ENCODE measurements at regions of chr16 and their contacts with region 1.

Region 1: DNA sequence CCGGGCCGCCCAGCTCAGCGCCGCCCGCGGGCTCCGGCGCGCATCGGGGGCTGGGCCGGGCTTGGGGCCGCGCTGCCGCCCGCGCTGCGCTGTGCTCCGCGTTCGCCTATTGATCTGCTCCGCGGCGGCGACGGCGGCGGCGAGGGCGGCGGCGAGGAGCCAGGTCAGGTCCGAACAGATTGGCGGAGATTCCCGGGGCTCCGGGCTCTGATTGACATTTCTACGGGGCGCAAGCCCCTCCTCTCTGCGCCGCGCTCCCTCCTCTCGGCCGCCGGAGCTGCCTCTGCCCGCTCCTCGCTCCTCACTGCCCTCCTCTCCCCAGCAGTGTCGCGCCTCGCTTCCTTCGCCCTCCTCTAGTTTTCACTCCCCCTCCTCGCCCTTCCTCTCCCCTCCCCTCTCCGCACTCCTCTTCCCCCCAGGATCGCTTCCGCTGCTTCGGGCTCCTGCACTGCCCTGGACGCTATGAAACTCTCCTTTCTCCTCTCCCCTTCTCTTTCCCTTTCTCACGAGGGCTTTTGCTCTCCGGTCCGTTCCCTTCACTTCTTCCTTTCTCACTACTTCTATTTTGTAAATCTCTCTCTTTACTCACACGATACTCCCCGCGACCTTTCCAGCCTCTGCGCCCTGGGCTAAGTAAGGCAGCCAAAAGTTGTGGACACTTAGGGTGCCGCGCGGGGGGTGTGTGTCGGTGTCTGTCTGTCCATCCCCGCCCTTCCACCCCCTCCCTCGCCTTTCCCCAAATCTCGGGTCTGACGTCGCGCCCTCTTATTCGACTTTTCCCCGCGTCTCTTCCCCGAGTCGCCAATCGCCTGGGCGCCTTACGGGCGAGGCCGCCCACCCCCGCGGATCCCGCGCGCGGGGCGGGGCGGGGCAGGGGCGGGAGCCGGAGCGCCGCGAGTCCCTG is at the start of gene IRX3:
- DNase-seq: peak; percentile 93
- ATAC-seq: peak; percentile 90
- total RNA-seq, gene IRX3: 38.8 TPM

Region 2: GRCh38 chr16:53892155-53892554 is 394.2 kb before region 1 on chr16:
- intact Hi-C with region 1: loop called (anchors 2 kb)
- DNase-seq: no peak
- ATAC-seq: peak; percentile 60

Region 3: DNA sequence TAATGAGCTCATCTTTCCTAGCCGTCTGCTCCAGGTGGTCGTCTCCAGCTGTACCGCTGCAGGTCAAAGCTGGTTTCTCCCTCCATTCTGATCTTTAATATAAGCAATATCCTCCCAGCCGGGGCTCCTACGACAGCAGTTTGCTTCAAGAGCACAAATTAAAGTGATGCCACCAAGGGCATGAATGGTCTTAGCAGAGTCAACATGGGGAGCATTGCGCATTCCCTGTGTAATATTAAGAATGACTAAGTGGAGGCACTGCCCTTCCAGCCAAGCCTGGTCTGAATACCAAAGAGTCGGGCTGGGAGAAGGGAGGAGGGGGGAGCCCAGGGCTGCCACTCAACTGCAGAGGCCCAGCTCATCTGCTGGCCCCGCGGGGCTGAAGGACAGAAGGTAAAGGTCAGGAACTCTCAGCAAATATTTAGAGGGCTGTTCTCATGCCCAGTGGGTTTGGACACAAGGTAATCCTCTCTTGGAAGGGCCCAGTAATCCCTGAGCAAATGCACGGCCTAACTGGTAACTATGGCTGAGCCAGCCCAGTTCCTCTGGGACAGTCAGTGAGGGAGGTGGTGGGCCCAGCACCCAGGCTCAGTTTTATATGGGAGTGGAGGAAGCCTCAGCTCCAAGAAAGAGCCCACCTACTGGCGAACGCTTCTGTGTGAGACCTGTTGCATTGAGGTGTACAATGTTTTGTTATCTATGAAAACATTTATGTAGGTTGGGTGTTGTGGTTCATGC is 121.0 kb before region 1 on chr16:
- intact Hi-C with region 1: no loop called
- DNase-seq: no peak
- ATAC-seq: no peak

Region 4: DNA sequence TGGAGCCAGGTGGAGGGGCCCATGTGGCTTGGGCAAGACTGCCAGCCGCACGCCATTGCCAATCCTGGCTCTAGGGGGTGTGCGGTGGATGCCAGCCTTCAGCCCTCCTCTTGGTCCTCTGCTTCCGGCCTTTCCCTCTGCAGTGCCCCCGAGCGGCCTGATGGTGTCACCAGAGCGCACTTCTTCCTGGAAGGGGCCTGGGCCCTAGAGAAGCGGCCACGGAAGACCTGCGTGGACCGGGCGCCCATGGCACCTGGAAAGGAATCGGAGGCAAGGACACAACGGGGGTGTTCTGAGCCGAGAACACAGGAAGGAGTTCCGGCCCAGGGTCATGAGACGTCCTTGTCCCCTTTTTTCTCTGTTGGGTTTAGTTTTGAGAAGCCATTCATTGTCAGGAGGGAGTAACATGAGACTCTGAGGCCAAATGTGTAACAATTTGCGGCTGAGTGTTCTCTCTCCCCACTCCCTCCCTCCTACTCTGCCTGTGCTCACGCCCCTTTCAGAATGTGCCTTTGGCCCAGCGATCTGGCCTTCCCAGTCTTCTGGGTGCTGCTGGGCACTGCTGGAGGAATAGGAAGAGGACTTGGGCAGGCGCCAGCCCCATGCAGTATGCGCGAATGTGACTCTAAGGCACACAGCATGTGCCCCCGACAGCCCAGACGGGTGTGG is 92.5 kb before region 1 on chr16:
- intact Hi-C with region 1: loop called (anchors 2 kb)
- DNase-seq: peak; percentile 88
- ATAC-seq: peak; percentile 89

Region 5: DNA sequence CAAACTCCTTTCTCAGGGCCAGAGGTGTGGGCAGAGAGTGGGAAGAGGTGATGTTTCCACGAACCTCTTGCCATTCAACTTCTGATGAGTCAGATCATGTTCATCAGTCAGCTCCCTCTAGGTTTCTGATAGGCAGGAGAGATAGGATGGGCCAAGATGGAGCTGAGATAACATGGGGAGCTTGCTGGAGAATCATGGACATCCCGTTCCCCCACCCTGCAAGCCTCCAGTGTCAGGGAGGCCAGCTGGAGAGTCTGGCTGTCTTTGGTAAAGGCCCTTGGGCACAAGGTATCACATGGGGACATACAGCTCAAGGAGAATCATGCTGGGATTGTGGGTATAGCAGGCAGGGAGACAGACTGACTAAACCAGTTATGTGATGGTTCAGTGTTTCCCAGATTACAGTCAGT is 136.2 kb after region 1 on chr16:
- intact Hi-C with region 1: loop called (anchors 5 kb)
- DNase-seq: no peak
- ATAC-seq: peak; percentile 29

Region 6: DNA sequence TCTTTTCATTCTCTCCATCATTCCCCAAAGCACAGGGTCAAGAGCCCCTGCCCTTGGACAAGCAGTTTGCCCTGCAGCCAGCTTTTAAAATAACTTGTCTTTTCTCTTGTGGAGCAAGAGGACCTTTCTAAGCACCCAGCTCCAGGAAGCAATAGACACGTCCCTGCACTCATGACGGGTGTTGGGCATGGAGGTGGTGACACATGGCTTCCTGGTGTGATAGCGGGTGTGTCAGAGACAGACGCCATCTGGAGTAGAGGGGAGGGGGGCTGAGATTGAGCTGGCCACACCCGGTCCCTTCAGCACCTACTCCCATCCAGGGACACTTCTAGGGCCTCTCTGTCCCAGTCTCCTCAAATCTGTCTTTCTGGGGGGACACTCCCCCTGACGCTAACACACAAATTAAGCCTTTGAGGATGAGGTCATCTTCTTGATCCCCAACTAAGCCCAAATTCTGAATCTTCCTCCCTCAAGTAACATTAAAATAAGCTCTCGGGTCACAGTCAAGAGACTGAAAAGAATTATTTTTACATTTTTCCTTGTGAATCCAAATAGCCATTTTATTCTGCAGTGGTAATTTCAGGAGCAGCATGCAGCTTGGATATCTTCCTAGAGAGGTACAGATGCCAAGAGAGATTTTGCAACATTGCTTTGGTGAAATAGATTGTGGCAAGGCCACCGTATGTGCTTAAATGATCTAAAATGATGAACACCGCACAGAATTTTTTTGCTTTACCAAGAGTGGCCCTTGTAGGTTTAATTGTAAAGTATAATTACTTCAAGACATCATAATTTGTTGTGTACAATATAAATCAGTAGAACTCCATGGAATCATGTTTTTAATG is 216.9 kb after region 1 on chr16:
- intact Hi-C with region 1: loop called (anchors 2 kb)
- DNase-seq: peak; percentile 75
- ATAC-seq: peak; percentile 97

Region 7: DNA sequence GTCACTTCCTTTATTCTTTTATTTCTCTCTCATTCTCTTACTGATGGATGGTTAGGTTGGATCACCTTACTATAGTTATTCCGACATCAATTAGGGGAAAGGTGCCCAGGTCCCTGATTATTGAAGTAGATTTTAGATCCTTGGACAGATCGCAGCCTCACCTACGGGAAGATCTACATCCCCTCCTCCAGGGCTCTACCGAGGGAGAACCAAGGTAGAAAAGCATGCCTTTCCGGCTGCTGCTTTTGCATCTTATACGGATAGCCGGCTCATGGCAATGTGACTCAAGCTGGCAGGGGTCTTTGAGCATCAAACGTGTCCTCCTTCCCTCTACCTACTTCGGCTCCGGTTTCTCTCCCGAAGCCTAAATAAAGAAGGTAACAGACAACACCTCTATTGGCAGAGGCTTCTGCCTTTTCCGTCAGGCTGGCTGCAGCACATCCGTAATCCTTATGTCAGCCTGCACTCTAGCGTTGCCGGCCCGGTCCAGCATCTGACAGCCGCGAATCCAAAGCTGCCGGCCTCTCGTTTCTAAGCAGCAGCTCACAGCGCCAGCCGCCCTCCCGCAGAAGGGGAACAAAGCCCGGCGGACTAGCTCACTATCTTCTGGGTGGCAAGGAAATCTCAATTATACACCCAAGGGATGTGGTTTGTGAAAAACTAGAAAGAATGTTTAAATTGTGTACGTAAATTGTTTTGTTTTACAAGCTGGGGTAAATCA is 1084.6 kb after region 1 on chr16:
- intact Hi-C with region 1: loop called (anchors 10 kb)
- DNase-seq: peak; percentile 82
- ATAC-seq: peak; percentile 83

Measured in Right ventricle myocardium inferior (tissue), 1 donor.